CD8-positive, alpha-beta memory T cell (primary cell): ENCODE measurements at regions of chr11 and their contacts with region 1.

Region 1: GRCh38 chr11:117843666-117844484 is 19.3 kb upstream of the FXYD2 start:
- DNase-seq: peak; percentile 64 to 87 (median 76)
- H3K4me3 ChIP-seq: no peak overlapping the region
- H3K4me3 Mint-ChIP-seq: no peak overlapping the region
- H3K27ac ChIP-seq: no peak overlapping the region
- H3K27ac Mint-ChIP-seq: no peak overlapping the region
- H3K4me1 ChIP-seq: peaks cover 8% of the 10 kb centered on the region
- H3K4me1 Mint-ChIP-seq: peaks cover 2 to 9% (median 4%) of the 10 kb centered on the region in 3 donors
- H3K27me3 ChIP-seq: no peaks in the 10 kb centered on the region
- H3K27me3 Mint-ChIP-seq: peaks cover 0 to 3% of the 10 kb centered on the region in 2 donors

Region 2: DNA sequence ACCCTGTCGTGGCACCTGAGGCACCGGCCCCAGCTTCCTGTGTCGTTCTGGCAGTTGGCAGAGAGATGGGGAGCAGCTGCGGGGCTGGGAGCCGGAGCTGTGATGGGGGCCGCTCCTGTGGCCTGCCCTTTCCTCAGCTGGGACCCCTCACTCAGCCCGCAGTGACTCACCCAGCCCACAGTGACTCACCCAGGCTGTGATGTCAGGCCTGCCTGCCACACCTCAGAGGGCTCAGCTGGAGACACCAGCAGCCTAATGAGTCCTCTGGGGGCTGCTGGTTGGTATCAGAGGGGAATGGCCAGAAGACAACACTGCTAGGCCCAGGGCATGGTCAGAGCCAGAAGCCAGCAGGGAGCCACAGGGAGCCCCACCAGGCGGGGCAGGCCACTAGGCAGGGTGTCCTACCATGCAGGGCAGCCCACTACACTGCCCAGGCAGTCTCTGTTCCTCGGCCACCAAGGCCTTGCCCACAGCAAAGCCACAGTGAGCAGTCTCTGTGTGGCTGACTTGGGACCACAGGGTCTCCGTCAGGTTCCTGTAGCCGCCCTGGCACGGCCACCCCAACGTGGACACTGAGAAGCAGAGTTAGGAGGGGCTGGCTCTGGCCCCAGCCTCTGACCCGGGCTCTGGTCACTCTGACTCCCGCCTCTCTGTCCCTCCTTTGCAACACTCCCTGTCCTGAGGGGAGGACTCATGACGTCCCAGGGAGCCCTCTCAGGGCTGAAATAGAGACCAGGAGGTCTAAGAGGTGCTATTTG is 15.1 kb before region 1 on chr11:
- CTCF ChIA-PET with region 1: interaction called, 20 read pairs
- POLR2A ChIA-PET with region 1: interaction called, 4 read pairs
- DNase-seq: peak; percentile 51 to 95 (median 71)
- H3K4me3 ChIP-seq: no peak overlapping the region
- H3K4me3 Mint-ChIP-seq: peak overlapping the region; percentile 7 to 89 (median 57)
- H3K27ac ChIP-seq: peak overlapping the region; percentile 21
- H3K27ac Mint-ChIP-seq: peak overlapping the region; percentile 88 to 97 (median 94)
- H3K4me1 ChIP-seq: peaks cover 46% of the 10 kb centered on the region
- H3K4me1 Mint-ChIP-seq: peaks cover 65 to 83% (median 67%) of the 10 kb centered on the region in 3 donors
- H3K27me3 ChIP-seq: no peaks in the 10 kb centered on the region
- H3K27me3 Mint-ChIP-seq: peaks cover 0 to 2% of the 10 kb centered on the region in 2 donors

Region 3: GRCh38 chr11:117970400-117971024 is 126.6 kb after region 1 on chr11:
- CTCF ChIA-PET with region 1: no interaction called
- POLR2A ChIA-PET with region 1: no interaction called
- DNase-seq: peak in 3 of 5 donors; percentile 14 to 60 (median 39)
- H3K4me3 ChIP-seq: peak overlapping the region; percentile 22
- H3K4me3 Mint-ChIP-seq: peak overlapping the region; percentile 8 to 77 (median 67)
- H3K27ac ChIP-seq: no peak overlapping the region
- H3K27ac Mint-ChIP-seq: peak overlapping the region; percentile 75 to 93 (median 88)
- H3K4me1 ChIP-seq: peaks cover 60% of the 10 kb centered on the region
- H3K4me1 Mint-ChIP-seq: peaks cover 61 to 73% (median 69%) of the 10 kb centered on the region in 3 donors
- H3K27me3 ChIP-seq: no peaks in the 10 kb centered on the region
- H3K27me3 Mint-ChIP-seq: no peaks in the 10 kb centered on the region